ENCODE measurements at regions of chr2 and their contacts with region 1.

Region 1: DNA sequence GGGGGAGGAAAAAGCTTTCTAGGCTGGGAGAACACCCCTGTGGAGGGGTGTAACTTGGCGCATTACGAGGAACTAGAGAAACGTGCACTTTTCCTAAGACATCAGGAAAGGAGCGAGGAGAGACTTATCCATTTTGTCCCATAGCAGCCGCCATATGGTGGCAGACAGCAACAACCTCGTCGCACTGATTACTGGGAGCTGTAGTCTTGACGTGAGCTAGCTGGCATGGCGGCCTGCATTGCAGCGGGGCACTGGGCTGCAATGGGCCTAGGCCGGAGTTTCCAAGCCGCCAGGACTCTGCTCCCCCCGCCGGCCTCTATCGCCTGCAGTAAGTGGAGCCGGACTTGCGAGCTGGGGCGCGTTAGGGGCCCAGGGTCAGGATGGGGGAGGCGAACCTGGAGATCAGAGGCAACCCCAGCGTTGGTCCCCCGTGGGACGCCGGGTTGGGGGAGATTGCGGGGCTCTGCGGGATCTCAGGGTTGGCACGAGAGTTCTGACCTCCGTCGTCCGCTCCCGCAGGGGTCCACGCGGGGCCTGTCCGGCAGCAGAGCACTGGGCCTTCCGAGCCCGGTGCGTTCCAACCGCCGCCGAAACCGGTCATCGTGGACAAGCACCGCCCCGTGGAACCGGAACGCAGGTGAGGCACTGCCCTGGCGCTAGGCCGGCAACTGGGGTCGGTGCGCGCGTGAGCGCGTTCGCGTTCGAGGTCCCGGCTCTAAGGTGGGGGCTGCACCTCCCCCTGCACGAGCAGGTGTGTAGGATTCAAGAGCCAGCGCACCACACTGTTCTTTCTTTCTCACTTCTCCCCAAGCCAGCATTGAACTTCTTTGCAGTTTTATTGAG is at the start of gene MRPL19:
- DNase-seq: peak; percentile 59
- ATAC-seq: peak; percentile 96
- H3K4me3 Mint-ChIP-seq: peak within 1 kb of the TSS; percentile 95
- H3K27ac Mint-ChIP-seq: peak within 1 kb of the TSS; percentile 91
- H3K4me1 Mint-ChIP-seq: peaks cover 23% of the 10 kb centered on the region
- H3K27me3 Mint-ChIP-seq: no peaks in the 10 kb centered on the region
- CTCF ChIP-seq: no peak
- total RNA-seq, gene MRPL19: 39.1 and 39.6 TPM in 2 replicates

Region 2: GRCh38 chr2:75710577-75711253 is 63.9 kb after region 1 on chr2 and contains the start of gene GCFC2:
- CTCF ChIA-PET with region 1: no interaction called
- POLR2A ChIA-PET with region 1: interaction called, 5 read pairs
- intact Hi-C with region 1: loop called (anchors 1 kb)
- DNase-seq: peak; percentile 82
- ATAC-seq: peak; percentile 90
- H3K4me3 Mint-ChIP-seq: peak within 1 kb of the TSS; percentile 89
- H3K27ac Mint-ChIP-seq: peak within 1 kb of the TSS; percentile 95
- H3K4me1 Mint-ChIP-seq: peaks cover 21% of the 10 kb centered on the region
- H3K27me3 Mint-ChIP-seq: peaks cover 2% of the 10 kb centered on the region
- CTCF ChIP-seq: no peak
- total RNA-seq, gene GCFC2: 26.2 and 27.5 TPM in 2 replicates

Measured in activated B cell treated with CpG ODN at 0.5 μM for 24 hours (primary cell).